ENCODE measurements at regions of chr11 and their contacts with region 1.

Region 1: DNA sequence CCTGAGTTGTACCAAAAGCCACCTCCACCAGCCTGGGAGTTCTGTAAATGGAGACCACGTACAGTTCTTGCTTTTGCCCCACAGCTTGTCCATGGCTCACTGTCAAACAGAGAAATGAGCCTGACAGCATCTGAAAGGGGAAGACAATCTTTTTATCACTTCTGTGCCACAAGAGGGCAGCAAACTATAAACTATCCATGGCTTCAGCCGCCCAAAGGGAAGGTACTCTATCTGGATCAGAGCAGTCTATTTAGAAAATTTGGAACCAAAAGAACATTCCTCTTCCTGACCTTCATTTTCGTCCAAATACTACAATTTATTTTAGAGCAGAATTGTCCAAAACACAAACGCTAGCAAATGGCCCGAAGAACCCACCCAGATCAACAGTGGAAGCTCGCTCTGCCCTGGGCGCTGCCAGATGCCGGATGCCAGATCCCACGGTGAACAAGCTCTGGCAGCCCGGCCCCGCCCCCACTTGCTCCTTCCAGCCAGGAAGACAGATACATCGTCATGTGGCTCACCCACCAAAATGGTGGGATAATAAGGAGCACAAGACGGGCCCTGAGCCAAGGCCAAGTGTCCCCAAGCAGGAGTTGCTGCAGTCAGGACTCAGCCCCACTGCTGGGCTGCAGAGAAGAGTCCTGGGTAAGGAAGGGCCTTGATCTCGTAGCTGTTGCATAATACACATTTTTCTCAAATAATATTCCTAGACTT is 23.9 kb upstream of the SCGB1A1 start:
- DNase-seq: peak; percentile 55
- ATAC-seq: peak; percentile 91
- H3K4me3 Mint-ChIP-seq: no peak overlapping the region
- H3K27ac Mint-ChIP-seq: no peak overlapping the region
- H3K4me1 Mint-ChIP-seq: peaks cover 12% of the 10 kb centered on the region
- H3K27me3 Mint-ChIP-seq: no peaks in the 10 kb centered on the region

Region 2: DNA sequence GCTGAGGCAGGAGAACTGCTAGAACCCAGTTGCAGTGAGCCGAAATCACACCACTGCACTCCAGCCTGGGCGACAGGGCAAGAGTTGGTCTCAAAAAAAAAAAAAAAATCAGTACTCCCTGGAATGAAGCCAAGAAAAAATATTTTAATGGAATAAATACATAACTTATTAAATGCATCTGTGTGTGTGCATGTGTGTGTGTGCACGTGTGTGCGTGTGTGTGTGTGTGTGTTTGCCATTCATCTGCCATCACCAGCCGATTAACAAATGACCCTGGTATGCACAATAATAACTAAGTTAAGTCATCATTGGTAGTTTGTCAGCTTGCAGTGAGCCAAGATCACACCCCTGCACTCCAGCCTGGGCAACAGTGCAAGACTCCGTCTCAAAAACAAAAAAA is 11.2 kb before region 1 on chr11:
- CTCF ChIA-PET with region 1: interaction called, 13 read pairs
- POLR2A ChIA-PET with region 1: no interaction called
- intact Hi-C with region 1: loop called (anchors 1 kb)
- DNase-seq: no peak
- ATAC-seq: no peak
- H3K4me3 Mint-ChIP-seq: no peak overlapping the region
- H3K27ac Mint-ChIP-seq: no peak overlapping the region
- H3K4me1 Mint-ChIP-seq: peaks cover 10% of the 10 kb centered on the region
- H3K27me3 Mint-ChIP-seq: no peaks in the 10 kb centered on the region

Region 3: DNA sequence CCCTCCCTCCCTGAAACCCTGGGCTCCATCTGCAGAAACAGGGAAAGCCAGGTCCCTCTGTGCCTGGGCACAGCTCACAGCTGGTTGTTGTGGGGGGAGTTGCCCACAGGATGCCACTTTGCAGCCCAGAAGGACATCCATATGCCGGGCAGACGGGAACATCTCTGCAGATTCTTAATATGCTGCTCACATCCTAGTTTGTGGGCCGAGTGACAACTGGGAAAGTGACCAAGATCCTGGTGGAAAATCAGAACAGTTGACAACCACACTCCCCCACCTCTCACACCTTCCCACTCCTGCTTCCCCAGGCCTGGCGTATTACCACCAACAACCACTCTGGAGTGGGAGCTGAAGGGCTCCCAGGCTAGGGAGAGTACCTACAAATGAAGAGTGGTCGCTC is 16.5 kb after region 1 on chr11:
- CTCF ChIA-PET with region 1: interaction called, 11 read pairs
- POLR2A ChIA-PET with region 1: no interaction called
- intact Hi-C with region 1: no loop called
- DNase-seq: no peak
- ATAC-seq: no peak
- H3K4me3 Mint-ChIP-seq: no peak overlapping the region
- H3K27ac Mint-ChIP-seq: no peak overlapping the region
- H3K4me1 Mint-ChIP-seq: no peaks in the 10 kb centered on the region
- H3K27me3 Mint-ChIP-seq: no peaks in the 10 kb centered on the region

Region 4: DNA sequence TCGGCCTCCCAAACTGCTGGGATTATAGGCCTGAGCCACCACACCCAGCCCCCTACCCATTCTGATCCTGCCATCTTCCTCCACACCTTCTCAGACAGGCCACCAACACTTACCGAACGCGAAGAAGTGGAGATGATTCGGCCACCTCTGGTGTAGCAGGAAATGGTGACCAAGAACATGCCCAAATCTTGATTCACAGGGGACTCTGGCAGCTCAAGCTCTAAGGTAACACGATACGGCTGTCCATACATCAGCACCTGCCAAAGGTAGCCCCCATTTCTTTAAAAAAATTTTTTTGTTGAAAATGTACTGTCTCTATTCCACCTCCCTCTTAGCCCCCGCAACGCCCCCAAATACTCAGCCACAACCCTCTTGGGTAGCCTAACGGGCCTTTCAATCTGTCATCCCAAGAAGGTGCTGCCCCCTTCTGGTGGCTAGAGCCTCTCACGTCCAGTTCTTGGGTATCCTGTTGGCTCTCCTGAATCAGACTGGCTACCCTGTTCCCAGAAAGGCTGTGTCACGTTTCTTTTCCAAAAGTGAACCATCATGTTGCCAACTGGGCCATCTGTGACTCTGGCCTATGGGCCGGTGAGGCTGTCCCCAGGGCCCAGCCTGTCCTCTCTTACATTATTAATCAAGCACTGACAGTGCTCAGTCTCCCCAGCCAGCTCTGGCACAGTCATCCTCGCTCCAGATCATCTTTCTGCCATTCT is 299.6 kb after region 1 on chr11:
- CTCF ChIA-PET with region 1: interaction called, 4 read pairs
- POLR2A ChIA-PET with region 1: no interaction called
- intact Hi-C with region 1: loop called (anchors 1 to 10 kb)
- DNase-seq: peak; percentile 86
- ATAC-seq: peak; percentile 95
- H3K4me3 Mint-ChIP-seq: no peak overlapping the region
- H3K27ac Mint-ChIP-seq: no peak overlapping the region
- H3K4me1 Mint-ChIP-seq: peaks cover 5% of the 10 kb centered on the region
- H3K27me3 Mint-ChIP-seq: no peaks in the 10 kb centered on the region

Region 5: GRCh38 chr11:62860835-62861563 is 466.0 kb after region 1 on chr11:
- CTCF ChIA-PET with region 1: no interaction called
- POLR2A ChIA-PET with region 1: no interaction called
- intact Hi-C with region 1: loop called in 1 of 2 experiments (anchors 10 kb)
- DNase-seq: no peak
- ATAC-seq: peak; percentile 28
- H3K4me3 Mint-ChIP-seq: no peak overlapping the region
- H3K27ac Mint-ChIP-seq: peak overlapping the region; percentile 69
- H3K4me1 Mint-ChIP-seq: peaks cover 43% of the 10 kb centered on the region
- H3K27me3 Mint-ChIP-seq: no peaks in the 10 kb centered on the region

Measured in activated CD4-positive, alpha-beta T cell treated with anti-CD3 and anti-CD28 coated beads for 36 hours (primary cell).